Activated CD4-positive, alpha-beta T cell treated with anti-CD3 and anti-CD28 coated beads, Interleukin-2, amount 10 ng/mL, durations not matched to agents 24 days and 14 days (primary cell): ENCODE measurements at regions of chr13 and their contacts with region 1.

Region 1: GRCh38 chr13:30739761-30740642 is 4.7 kb downstream of the ALOX5AP start:
- DNase-seq: peak; percentile 90
- H3K4me3 Mint-ChIP-seq: peak overlapping the region; percentile 78
- H3K27ac Mint-ChIP-seq: peak overlapping the region; percentile 88
- H3K4me1 Mint-ChIP-seq: peaks cover 73% of the 10 kb centered on the region
- H3K27me3 Mint-ChIP-seq: no peaks in the 10 kb centered on the region

Region 2: GRCh38 chr13:30371649-30372265 is 368.2 kb before region 1 on chr13:
- intact Hi-C with region 1: loop called (anchors 5 kb)
- DNase-seq: peak; percentile 91
- H3K4me3 Mint-ChIP-seq: peak overlapping the region; percentile 85
- H3K27ac Mint-ChIP-seq: peak overlapping the region; percentile 91
- H3K4me1 Mint-ChIP-seq: peaks cover 75% of the 10 kb centered on the region
- H3K27me3 Mint-ChIP-seq: no peaks in the 10 kb centered on the region

Region 3: DNA sequence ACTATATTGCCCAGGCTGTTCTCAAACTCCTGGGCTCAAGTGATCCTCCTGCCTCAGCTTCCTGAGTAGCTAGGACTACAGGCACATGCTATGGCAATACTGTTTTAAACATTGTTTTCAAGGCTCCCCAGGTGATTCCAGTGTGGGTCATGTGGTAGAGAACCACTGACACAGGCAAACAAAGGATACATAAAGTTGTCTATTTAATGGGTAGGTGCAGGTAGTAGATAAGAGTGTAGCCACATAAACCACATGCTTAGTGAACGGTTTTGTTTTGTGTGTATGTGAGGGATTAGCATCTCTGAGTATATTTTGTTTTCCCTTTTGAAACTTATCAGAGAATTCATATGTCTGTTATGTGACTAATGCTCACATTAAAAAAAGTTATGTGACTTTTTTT is 85.6 kb before region 1 on chr13:
- intact Hi-C with region 1: loop called (anchors 1 kb)
- DNase-seq: peak; percentile 86
- H3K4me3 Mint-ChIP-seq: peak overlapping the region; percentile 66
- H3K27ac Mint-ChIP-seq: peak overlapping the region; percentile 85
- H3K4me1 Mint-ChIP-seq: peaks cover 32% of the 10 kb centered on the region
- H3K27me3 Mint-ChIP-seq: no peaks in the 10 kb centered on the region

Region 4: GRCh38 chr13:30711375-30711774 is 28.6 kb before region 1 on chr13:
- intact Hi-C with region 1: loop called (anchors 1 kb)
- DNase-seq: no peak
- H3K4me3 Mint-ChIP-seq: no peak overlapping the region
- H3K27ac Mint-ChIP-seq: peak overlapping the region; percentile 41
- H3K4me1 Mint-ChIP-seq: peaks cover 18% of the 10 kb centered on the region
- H3K27me3 Mint-ChIP-seq: peaks cover 5% of the 10 kb centered on the region

Region 5: GRCh38 chr13:30796132-30796572 is 56.1 kb after region 1 on chr13:
- intact Hi-C with region 1: loop called (anchors 1 kb)
- DNase-seq: peak; percentile 71
- H3K4me3 Mint-ChIP-seq: peak overlapping the region; percentile 28
- H3K27ac Mint-ChIP-seq: peak overlapping the region; percentile 46
- H3K4me1 Mint-ChIP-seq: peaks cover 31% of the 10 kb centered on the region
- H3K27me3 Mint-ChIP-seq: no peaks in the 10 kb centered on the region

Region 6: DNA sequence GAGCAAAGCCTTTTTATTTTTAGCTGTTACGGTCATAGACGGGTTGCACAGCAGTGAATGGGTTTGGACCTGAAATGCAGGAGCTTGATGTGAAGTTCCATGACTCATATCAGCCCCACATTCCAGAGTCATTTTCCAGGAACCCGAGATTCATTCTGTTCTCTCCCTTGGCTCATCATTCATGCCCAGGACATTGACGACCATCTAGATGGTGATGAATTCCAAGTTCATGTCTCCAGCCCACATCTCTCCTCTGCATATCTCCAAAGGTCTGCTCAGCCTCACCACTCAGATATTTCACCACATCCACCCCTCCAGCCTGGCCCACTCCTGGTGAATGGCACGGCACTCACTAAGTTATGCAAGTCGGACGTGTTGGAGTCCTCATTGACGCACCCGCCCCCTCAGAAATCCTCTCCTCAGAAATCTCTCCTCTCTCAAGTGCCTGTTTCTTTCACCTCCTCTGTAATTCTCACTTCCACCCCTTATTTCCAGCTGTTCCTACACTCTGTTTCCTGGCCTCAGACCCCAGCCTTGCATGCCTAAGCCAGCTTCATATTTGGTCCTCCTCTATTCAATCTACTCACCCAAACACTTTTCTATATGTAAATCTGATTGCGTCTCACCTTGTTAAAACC is 78.4 kb after region 1 on chr13:
- intact Hi-C with region 1: no loop called
- DNase-seq: no peak
- H3K4me3 Mint-ChIP-seq: no peak overlapping the region
- H3K27ac Mint-ChIP-seq: no peak overlapping the region
- H3K4me1 Mint-ChIP-seq: peaks cover 5% of the 10 kb centered on the region
- H3K27me3 Mint-ChIP-seq: peaks cover 27% of the 10 kb centered on the region

Region 7: GRCh38 chr13:30847650-30848307 is 107.8 kb after region 1 on chr13:
- intact Hi-C with region 1: loop called (anchors 5 kb)
- DNase-seq: no peak
- H3K4me3 Mint-ChIP-seq: no peak overlapping the region
- H3K27ac Mint-ChIP-seq: no peak overlapping the region
- H3K4me1 Mint-ChIP-seq: peaks cover 9% of the 10 kb centered on the region
- H3K27me3 Mint-ChIP-seq: peaks cover 5% of the 10 kb centered on the region

Region 8: GRCh38 chr13:31012655-31013024 is 272.6 kb after region 1 on chr13:
- intact Hi-C with region 1: no loop called
- DNase-seq: no peak
- H3K4me3 Mint-ChIP-seq: no peak overlapping the region
- H3K27ac Mint-ChIP-seq: no peak overlapping the region
- H3K4me1 Mint-ChIP-seq: peaks cover 12% of the 10 kb centered on the region
- H3K27me3 Mint-ChIP-seq: peaks cover 46% of the 10 kb centered on the region

Region 9: DNA sequence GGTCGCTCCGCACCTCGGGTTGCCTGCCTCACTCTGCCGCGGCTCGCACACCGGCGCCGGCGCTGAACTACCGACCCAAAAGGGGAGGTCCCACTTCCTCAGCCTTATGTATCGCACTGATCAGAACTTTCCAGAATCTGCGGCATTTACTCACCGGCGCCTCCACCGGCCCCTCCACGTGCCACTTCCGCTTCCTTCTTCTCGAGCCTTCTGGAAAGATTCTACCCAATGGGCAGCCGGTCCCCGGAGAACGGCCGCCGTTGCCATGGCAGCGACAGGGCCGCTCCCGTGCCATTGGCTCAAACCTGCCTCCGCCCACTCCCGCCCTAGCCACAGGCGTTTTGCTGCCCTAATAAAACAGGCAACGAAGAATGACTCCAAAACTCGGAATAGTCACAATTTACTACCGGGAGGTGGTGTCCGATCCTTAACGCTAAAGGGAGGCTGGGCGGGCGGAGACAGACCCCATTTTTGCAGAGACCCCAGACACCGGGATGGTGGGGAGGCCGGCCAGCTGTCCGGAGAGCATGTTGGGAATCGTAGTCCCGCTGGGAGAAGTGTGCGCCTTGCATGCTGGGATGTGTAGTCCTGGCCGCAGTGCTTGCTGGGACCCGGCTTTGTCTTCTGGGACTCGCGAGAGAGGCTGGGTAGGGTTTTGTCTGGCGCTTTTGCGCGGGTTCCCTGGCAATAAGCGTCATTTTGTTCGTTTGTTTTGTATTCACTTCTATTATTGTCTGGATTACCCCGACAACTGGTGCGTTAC is 422.0 kb after region 1 on chr13 and contains the start of gene HSPH1:
- intact Hi-C with region 1: loop called (anchors 5 kb)
- DNase-seq: peak; percentile 100
- H3K4me3 Mint-ChIP-seq: peak within 1 kb of the TSS; percentile 99
- H3K27ac Mint-ChIP-seq: peak within 1 kb of the TSS; percentile 99
- H3K4me1 Mint-ChIP-seq: peaks cover 45% of the 10 kb centered on the region
- H3K27me3 Mint-ChIP-seq: peaks cover 2% of the 10 kb centered on the region
- total RNA-seq, gene HSPH1: 381 and 385 TPM in 2 replicates